GM18951 (cell line): ENCODE measurements at regions of chr22 and their contacts with region 1.

Region 1: DNA sequence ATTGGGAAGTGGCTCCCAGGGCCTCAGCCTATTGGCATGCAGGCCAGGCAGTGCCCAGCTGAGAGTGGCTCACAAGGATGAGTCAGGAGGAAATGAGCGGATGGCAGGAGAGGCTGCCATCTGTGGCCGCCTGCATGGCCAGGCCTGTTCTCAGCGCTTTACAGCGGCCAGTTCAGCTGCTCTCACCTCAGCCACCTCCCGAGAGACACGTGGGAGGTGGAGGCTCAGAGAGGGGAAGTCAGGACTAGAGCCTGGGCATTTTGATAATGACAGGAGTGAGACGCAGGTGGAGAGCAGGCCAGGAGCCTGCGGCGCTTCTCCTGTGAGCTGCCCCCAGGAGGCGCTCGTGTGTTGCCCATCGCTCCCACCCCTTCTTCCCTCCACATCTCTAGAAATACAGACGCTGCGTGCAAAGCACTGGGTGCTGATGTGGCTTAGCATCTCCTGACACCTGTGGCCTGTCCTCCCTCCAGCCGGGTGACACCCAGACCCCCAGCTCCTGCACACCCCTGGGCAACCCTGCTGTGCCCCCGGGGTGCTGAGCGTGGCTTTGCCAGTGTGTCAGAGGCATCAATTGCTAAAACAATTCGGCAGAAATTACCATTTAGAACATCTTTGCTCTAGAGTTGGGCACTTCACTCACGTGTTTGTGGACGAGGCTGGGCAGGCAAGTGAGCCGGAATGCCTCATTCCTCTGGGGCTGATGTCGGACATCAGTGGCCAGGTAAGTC is 21.4 kb upstream of the PANX2 start:
- POLR2A ChIP-seq: no peak

Region 2: DNA sequence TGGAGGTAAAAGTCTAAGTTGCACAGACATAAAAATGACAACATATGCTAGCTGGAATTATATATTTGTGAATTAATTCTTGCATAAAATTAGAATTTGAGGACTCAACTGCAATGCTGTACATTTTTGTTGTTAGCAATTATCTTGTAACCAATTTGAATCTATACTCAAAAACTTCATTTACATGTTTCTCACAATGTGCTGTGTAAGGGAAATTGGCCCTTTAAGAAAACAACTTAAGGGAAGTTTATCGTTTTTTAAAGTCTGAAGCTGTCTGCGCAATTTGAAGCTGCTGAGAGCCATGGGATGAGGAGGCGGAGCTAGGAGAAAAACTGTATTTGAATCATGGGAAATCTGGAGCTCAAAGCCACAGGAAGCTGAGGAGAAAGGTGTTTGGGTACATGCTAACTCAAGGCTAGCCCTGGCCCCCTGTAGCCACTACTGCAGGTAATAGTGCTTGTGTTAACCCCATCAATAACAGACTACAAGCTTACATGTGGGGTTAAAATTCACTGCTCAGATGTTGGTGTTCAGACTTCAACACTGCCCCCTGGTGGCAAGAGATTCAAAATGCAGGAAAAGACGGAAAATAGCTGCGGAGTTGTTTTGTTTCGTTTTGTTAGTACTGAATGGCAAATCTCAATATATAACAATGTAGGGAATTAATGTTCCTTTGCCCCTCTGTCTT is 447.6 kb before region 1 on chr22:
- in situ Hi-C with region 1: no loop called
- POLR2A ChIP-seq: no peak

Region 3: DNA sequence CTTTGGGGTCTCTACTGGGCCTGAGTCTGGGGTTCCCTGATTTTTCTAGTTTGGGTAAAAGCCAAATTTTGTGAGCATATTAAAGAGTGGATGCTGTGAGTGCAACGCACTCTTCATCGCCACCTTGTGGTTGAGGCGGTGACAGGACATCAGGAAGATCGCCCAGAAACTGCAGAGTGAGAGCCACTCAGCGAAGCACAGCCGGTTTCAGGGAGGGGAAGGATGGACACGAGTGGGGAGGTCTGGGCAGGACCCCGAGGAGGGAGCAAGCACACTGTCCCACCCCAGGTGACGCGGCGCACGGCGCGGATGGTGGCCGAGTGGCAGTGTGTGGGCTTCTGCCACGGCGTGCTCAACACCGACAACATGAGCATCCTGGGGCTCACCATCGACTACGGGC is 60.7 kb after region 1 on chr22:
- in situ Hi-C with region 1: loop called (anchors 5 kb)
- POLR2A ChIP-seq: no peak